Activated naive CD8-positive, alpha-beta T cell treated with anti-CD3 and anti-CD28 coated beads, Interleukin-2, amount 10 ng/mL, durations not matched to agents 7 days and 5 days (primary cell): ENCODE measurements at regions of chr14 and their contacts with region 1.

Region 1: DNA sequence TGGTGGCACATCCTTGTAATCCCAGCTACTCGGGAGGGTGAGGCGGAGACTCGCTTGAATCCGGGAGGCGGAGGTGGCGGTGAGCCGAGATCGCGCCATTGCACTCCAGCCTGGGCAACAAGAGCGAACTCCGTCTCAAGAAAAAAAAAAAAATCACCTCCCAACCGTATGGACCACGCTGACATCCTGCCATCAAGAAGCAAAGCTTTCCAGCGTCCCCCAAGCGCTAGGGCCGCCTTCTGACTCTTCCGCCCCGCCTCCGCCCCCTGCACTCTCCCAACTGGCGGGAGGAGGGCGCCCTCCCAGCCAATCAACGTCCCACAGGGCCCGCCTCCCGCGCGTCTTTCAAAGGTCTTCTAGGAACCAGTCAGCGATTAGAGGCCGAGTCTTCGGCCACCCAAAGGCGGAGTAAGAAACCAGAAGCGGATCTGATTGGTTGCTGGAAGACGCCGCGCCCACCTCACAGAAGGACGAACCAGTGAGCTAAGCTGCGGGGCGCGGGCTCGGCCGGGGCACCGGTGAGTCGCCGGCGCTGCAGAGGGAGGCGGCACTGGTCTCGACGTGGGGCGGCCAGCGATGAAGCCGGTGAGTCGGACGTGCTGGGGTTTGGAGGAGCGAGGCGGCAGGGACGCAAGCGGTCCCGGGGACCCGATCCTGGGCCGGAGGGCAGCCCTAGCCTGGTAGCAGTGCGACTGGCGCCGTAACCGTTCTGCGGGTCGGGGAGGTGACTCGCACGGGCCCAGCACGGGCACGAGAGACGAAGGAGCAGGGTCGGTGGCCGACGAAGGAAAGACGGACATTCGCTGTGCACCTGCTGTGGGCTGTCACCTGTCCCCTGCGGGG is at the start of gene CDKN3:
- DNase-seq: peak; percentile 95
- ATAC-seq: peak; percentile 94
- H3K4me3 Mint-ChIP-seq: peak within 1 kb of the TSS; percentile 94
- H3K27ac Mint-ChIP-seq: peak within 1 kb of the TSS; percentile 89
- H3K4me1 Mint-ChIP-seq: peaks cover 22% of the 10 kb centered on the region
- H3K27me3 Mint-ChIP-seq: no peaks in the 10 kb centered on the region
- total RNA-seq, gene CDKN3: 64.8 to 67.6 TPM

Region 2: DNA sequence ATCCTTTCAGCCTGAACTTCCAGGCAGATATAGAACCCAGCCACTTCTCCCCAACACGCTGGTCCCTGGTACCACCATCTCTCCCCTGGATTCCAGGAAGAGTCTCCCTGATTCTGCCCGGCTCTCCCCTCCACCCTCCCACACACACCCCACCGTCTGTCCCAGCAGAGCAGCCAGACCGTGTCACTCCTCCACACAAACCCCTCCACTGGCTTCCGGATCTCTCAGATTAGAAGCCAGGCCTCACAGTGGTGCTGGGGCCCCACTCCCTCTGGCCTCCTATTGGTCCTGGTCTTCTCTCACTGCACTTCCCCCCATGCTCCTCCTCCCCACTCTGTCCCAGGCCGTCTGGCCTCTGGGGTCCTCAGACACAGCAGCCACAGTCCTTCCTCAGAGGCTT is 52.3 kb before region 1 on chr14:
- POLR2A ChIA-PET with region 1: no interaction called
- DNase-seq: no peak
- ATAC-seq: no peak
- H3K4me3 Mint-ChIP-seq: no peak overlapping the region
- H3K27ac Mint-ChIP-seq: no peak overlapping the region
- H3K4me1 Mint-ChIP-seq: no peaks in the 10 kb centered on the region
- H3K27me3 Mint-ChIP-seq: peaks cover 14% of the 10 kb centered on the region

Region 3: DNA sequence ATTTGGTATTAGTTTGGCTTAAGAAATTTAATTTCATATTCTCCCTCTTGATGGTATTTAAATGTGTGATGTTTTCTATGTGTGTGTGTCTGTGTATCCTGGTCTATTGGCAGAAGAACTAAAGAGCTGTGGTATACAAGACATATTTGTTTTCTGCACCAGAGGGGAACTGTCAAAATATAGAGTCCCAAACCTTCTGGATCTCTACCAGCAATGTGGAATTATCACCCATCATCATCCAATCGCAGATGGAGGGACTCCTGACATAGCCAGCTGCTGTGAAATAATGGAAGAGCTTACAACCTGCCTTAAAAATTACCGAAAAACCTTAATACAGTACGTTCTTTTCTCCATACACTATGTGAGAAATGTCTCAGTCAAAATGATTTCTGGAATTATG is 14.7 kb after region 1 on chr14:
- POLR2A ChIA-PET with region 1: interaction called, 12 read pairs
- DNase-seq: no peak
- ATAC-seq: no peak
- H3K4me3 Mint-ChIP-seq: no peak overlapping the region
- H3K27ac Mint-ChIP-seq: no peak overlapping the region
- H3K4me1 Mint-ChIP-seq: peaks cover 3% of the 10 kb centered on the region
- H3K27me3 Mint-ChIP-seq: no peaks in the 10 kb centered on the region

Region 4: DNA sequence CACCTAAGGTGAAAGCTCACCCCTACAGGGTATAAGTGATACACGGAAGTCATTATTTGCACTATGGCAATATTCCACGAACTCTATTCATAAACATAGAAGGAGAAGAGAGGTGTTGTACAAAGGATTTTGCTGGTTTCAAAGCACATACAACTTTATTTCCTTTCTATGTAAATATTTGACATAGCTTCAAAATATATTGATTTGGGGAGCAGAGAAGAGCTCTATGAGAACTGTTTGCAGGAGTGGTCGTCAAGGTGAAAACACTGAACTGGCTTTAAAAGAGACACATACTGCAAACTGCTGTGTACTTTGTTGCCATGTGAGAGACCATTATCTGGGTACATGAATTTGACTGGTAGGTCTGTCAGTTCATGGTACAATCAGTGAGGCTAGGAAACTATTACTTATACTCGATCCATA is 27.8 kb after region 1 on chr14:
- POLR2A ChIA-PET with region 1: no interaction called
- DNase-seq: no peak
- ATAC-seq: no peak
- H3K4me3 Mint-ChIP-seq: no peak overlapping the region
- H3K27ac Mint-ChIP-seq: no peak overlapping the region
- H3K4me1 Mint-ChIP-seq: peaks cover 2% of the 10 kb centered on the region
- H3K27me3 Mint-ChIP-seq: no peaks in the 10 kb centered on the region